HepG2 (cell line): ENCODE measurements at regions of chr1 and their contacts with region 1.

Region 1: DNA sequence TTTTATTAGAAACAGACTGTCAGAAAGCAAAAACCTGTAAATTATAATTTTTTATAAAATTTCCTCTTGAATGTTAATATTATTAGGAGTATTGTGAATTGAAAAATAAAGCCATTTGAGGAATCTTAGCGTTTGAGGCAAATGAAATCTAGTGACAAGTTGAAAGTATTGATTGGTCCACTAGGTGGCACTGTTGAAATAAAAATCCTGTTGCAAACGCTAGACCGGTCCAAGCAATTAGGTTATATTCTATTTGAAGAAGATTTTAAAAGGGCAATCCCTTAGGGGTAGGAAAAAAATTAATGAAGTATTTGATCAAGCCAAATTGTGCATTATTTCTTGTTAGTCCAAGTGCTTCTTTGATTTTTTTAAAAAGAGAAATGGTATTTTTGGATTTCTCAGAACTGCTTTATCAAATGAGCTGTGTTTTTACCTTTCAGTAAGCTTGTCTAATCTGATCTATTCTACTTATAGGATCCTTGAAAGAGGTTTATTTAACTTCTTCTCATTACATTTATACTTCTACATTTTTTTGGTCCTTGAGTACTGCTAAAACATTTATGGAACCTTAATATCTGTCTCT is 57.7 kb downstream of the ATG4C start:
- DNase-seq: peak; percentile 54
- ATAC-seq: peak; percentile 57; the same call in 1 of the 3 replicates
- H3K4me3 ChIP-seq: no peak overlapping the region
- H3K27ac ChIP-seq: no peak overlapping the region
- H3K4me1 ChIP-seq: no peaks in the 10 kb centered on the region
- H3K27me3 ChIP-seq: no peaks in the 10 kb centered on the region; a peak in 1 of 5 replicates
- CTCF ChIP-seq: peak; percentile 74
- EP300 ChIP-seq: no peak
- POLR2A ChIP-seq: no peak
- RAD21 ChIP-seq: peak; percentile 44; the same call in 1 of the 2 replicates

Region 2: DNA sequence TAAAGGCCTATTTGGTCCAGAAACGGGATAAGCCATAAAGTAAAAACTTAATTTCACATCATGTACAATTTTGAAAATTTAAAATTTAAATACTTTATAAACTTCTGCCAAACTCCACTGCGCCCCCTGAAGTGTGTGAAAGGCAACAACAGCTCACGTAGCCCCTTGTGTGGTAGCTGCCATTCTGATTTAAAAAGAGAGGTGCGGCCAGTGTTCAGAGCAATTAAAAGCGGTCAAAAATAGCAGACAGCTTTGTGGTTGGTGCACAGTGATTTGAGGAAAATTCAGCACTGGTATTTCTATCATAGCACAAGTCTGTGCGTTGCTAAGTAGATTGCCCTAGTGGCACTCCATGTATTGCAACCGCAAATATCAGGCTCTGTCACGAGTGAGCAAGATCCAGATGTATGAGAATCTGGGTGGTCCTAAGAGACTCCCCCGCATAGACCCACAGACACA is 64.8 kb after region 1 on chr1:
- CTCF ChIA-PET with region 1: interaction called, 24 read pairs
- POLR2A ChIA-PET with region 1: no interaction called
- in situ Hi-C with region 1: loop called (anchors 10 kb)
- intact Hi-C with region 1: loop called (anchors 1 kb)
- DNase-seq: no peak
- ATAC-seq: peak; percentile 76
- H3K4me3 ChIP-seq: no peak overlapping the region
- H3K27ac ChIP-seq: no peak overlapping the region
- H3K4me1 ChIP-seq: peaks cover 12% of the 10 kb centered on the region
- H3K27me3 ChIP-seq: no peaks in the 10 kb centered on the region; a peak in 1 of 5 replicates
- CTCF ChIP-seq: peak; percentile 36
- EP300 ChIP-seq: no peak
- POLR2A ChIP-seq: no peak
- RAD21 ChIP-seq: no peak

Region 3: DNA sequence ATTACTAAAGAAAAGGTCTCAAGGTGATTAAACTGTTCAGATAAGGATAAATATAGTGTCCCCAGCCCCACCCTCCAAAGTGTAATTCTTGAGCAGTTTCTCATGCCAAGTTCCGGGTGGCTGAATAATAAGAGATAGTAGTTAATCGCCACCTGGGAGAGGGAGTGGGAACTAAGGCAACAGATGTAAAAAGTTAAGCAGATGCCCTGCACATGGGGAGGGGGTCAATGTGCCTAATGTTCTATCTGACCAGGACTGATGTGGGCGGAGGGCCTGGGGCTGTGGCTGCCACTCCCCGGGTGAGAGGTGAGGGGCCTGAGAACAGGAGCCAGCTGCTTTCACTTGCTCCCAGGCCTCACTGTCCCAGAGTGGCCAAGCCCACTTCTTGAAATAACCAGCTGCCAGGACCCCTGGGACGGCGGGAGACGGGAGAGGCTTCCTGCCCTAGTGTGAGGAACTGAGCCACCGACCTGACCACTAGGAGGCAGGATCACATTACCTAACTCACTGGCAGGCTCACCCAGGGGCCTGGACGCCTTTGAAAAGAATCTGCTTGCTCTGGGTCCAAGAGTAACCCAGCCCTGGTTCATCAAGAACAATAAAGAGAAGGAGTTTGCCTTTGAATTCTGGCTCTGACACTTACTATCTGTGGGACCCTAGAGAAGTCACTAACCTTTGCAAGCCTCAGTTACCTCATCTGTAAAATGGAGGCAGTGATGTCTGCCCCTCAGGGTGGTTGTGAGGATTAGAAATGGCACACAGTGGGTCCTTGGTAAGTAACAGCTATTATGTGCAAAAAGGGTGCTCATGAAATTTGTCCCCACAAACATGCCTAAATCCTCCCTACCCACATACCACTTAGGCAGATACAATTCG is 121.5 kb after region 1 on chr1:
- CTCF ChIA-PET with region 1: no interaction called
- POLR2A ChIA-PET with region 1: no interaction called
- in situ Hi-C with region 1: no loop called
- intact Hi-C with region 1: no loop called
- DNase-seq: peak; percentile 30
- ATAC-seq: peak; percentile 96
- H3K4me3 ChIP-seq: no peak overlapping the region
- H3K27ac ChIP-seq: no peak overlapping the region
- H3K4me1 ChIP-seq: no peaks in the 10 kb centered on the region
- H3K27me3 ChIP-seq: no peaks in the 10 kb centered on the region
- CTCF ChIP-seq: peak; percentile 79
- EP300 ChIP-seq: no peak
- POLR2A ChIP-seq: no peak
- RAD21 ChIP-seq: 0 out of 2 replicates have a peak, but pooled peaks have one; percentile 33

Region 4: GRCh38 chr1:62989497-62989896 is 147.8 kb after region 1 on chr1:
- CTCF ChIA-PET with region 1: no interaction called
- POLR2A ChIA-PET with region 1: no interaction called
- in situ Hi-C with region 1: no loop called
- intact Hi-C with region 1: loop called (anchors 1 kb)
- DNase-seq: peak; percentile 12
- ATAC-seq: peak; percentile 48; the same call in 1 of the 3 replicates
- H3K4me3 ChIP-seq: no peak overlapping the region
- H3K27ac ChIP-seq: no peak overlapping the region
- H3K4me1 ChIP-seq: no peaks in the 10 kb centered on the region
- H3K27me3 ChIP-seq: no peaks in the 10 kb centered on the region; a peak in 1 of 5 replicates
- CTCF ChIP-seq: peak; percentile 36
- EP300 ChIP-seq: no peak
- POLR2A ChIP-seq: no peak
- RAD21 ChIP-seq: no peak

Region 5: GRCh38 chr1:63148825-63149645 is 307.4 kb after region 1 on chr1:
- CTCF ChIA-PET with region 1: interaction called, 8 read pairs
- POLR2A ChIA-PET with region 1: no interaction called
- in situ Hi-C with region 1: loop called (anchors 25 kb)
- intact Hi-C with region 1: loop called (anchors 1 kb)
- DNase-seq: peak; percentile 32
- ATAC-seq: peak; percentile 87
- H3K4me3 ChIP-seq: no peak overlapping the region
- H3K27ac ChIP-seq: no peak overlapping the region
- H3K4me1 ChIP-seq: no peaks in the 10 kb centered on the region
- H3K27me3 ChIP-seq: peaks cover 0 to 4% of the 10 kb centered on the region in 2 experiments; a peak in 1 of 5 replicates
- CTCF ChIP-seq: peak; percentile 75
- EP300 ChIP-seq: no peak
- POLR2A ChIP-seq: no peak
- RAD21 ChIP-seq: no peak; the same call in 1 of the 2 replicates